ENCODE measurements at regions of chr3 and their contacts with region 1.

Region 1: DNA sequence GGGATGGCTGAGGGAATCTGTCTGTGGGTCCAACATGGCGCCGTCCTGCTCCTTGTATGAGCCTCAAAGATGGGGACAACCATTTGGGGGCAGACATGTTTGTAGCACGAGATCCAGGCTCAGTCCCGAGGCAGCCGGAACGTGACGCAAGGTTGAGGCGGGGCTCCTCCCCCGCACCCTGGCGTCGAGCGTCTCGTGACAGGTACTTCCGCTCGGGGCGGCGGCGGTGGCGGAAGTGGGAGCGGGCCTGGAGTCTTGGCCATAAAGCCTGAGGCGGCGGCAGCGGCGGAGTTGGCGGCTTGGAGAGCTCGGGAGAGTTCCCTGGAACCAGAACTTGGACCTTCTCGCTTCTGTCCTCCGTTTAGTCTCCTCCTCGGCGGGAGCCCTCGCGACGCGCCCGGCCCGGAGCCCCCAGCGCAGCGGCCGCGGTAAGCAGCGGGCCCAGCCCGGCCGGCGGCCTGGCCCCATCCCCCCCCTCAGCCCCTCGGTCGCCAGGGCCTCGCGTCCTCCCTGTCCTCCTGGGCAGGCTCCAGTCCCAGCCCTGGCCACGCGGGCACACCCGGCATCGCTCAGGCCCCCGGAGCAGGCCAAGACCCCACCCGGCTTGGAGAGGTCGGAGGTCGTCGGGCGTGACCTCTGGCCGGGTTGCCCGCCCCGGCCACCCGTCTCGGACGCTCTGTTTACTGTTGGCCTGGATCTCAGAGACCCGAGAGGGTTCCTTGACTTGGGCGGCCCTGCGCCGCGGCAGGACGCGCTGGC is at the start of gene RAB7A:
- DNase-seq: peak; percentile 99
- H3K4me3 Mint-ChIP-seq: peak within 1 kb of the TSS; percentile 81
- H3K27ac Mint-ChIP-seq: peak within 1 kb of the TSS; percentile 89
- H3K4me1 Mint-ChIP-seq: peaks cover 53% of the 10 kb centered on the region
- H3K27me3 Mint-ChIP-seq: no peaks in the 10 kb centered on the region
- total RNA-seq, gene RAB7A: 222 to 228 TPM

Region 2: GRCh38 chr3:128051837-128052594 is 674.1 kb before region 1 on chr3 and contains the start of gene SEC61A1:
- CTCF ChIA-PET with region 1: no interaction called
- intact Hi-C with region 1: loop called (anchors 2 kb)
- DNase-seq: peak; percentile 95
- H3K4me3 Mint-ChIP-seq: peak within 1 kb of the TSS; percentile 91
- H3K27ac Mint-ChIP-seq: peak within 1 kb of the TSS; percentile 95
- H3K4me1 Mint-ChIP-seq: peaks cover 40% of the 10 kb centered on the region
- H3K27me3 Mint-ChIP-seq: peaks cover under 1% of the 10 kb centered on the region
- total RNA-seq, gene SEC61A1: 115 to 119 TPM

Region 3: DNA sequence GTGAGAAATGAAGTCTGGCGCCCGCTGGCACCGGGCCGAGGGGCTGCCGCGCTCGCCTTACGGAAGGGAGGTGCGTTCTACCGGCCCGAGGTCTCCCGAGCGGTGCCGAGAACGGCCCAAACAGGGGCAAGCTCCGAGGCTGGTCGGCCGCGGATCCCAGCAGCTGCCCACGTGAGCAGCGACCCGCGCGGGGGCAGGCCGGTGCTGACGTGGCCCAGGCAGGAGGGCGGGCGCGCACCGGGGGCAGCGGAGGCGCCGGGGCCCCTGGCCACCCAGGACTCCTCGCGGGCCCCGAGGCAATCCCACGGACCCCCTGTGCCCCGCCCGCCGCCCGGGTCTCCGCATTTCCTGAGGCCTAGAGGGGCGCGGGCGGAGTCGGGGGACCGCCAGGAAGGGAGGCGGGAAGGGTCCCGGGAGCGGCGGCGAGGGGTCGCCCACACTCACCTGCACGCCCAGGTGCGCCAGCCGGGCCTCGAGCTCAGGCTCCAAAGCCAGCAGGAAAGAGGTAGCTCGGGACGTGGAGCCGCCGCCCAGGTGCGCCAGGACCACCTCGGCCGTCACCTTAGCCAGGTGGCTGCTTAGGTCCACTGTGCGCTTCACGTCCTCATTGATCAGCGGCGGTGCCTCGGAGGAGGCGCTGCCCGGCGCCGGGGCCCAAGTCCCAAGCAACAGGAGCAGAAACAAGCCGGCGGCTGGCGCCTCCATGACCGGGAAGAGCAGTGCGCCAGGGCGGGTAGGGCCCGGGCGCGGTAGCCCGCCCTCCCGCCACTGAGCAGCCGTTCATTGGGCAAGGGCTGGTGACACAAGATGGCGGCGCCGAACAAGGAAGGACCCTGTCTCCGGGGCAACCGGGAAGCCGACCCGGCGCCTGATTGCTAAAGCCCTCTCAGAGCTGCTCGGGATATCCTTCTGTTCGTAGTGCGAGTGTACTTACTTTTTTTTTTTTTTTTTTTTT is 75.7 kb before region 1 on chr3 and contains the start of gene RPN1:
- CTCF ChIA-PET with region 1: interaction called, 4 read pairs
- intact Hi-C with region 1: loop called (anchors 1 kb)
- DNase-seq: peak; percentile 97
- H3K4me3 Mint-ChIP-seq: peak within 1 kb of the TSS; percentile 83
- H3K27ac Mint-ChIP-seq: peak within 1 kb of the TSS; percentile 88
- H3K4me1 Mint-ChIP-seq: peaks cover 30% of the 10 kb centered on the region
- H3K27me3 Mint-ChIP-seq: no peaks in the 10 kb centered on the region
- total RNA-seq, gene RPN1: 124 to 129 TPM

Region 4: GRCh38 chr3:128698211-128699064 is 27.7 kb before region 1 on chr3:
- CTCF ChIA-PET with region 1: no interaction called
- intact Hi-C with region 1: loop called (anchors 1 kb)
- DNase-seq: peak; percentile 32
- H3K4me3 Mint-ChIP-seq: peak overlapping the region; percentile 65
- H3K27ac Mint-ChIP-seq: no peak overlapping the region
- H3K4me1 Mint-ChIP-seq: peaks cover 2% of the 10 kb centered on the region
- H3K27me3 Mint-ChIP-seq: no peaks in the 10 kb centered on the region

Region 5: GRCh38 chr3:128794770-128795649 is 68.9 kb after region 1 on chr3:
- CTCF ChIA-PET with region 1: interaction called, 9 read pairs
- intact Hi-C with region 1: loop called (anchors 1 kb)
- DNase-seq: peak; percentile 83
- H3K4me3 Mint-ChIP-seq: peak overlapping the region; percentile 51
- H3K27ac Mint-ChIP-seq: peak overlapping the region; percentile 91
- H3K4me1 Mint-ChIP-seq: peaks cover 94% of the 10 kb centered on the region
- H3K27me3 Mint-ChIP-seq: no peaks in the 10 kb centered on the region

Region 6: DNA sequence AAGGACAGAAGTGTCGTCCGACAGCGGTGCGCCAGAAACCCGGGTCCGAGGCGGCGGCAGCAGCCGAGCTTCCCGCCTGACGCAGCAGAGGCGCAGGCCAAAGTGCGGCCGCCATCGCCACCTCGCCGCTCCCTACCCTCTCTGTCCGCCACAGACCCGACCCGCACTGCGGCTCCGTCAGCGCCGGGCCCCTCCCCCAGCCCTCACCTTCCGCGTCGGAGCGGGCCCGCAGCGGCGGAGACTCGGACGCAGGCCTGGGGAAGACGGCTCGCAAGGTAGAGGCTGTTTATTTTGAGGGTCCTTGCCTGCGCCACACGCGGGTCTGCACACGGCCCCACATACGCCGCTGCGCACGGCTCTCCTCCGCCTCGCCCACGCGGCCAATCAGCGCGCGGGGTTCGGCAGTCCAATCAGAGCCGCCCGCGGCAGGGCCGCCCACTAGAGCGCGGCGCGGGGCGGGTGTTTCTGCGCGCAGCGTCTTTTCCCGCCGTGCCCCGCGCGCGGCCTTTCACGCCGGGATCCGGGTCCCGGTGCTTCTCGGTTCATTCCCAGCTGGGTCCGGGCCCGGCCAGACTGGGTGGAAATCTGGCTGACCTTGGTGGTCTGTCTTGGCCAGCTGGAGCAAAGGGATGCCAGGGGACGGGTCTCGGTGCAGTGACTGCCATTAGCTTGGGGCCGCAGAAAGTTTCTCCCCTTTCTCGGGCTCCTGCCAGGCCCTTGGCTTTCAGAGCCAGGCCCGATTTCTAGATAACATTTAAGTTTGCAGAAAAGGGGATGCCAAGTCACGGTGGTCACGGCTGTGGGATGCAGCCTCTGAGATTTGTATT is 457.7 kb after region 1 on chr3 and contains the start of gene CNBP:
- CTCF ChIA-PET with region 1: no interaction called
- intact Hi-C with region 1: loop called (anchors 5 kb)
- DNase-seq: peak; percentile 93
- H3K4me3 Mint-ChIP-seq: peak within 1 kb of the TSS; percentile 96
- H3K27ac Mint-ChIP-seq: peak within 1 kb of the TSS; percentile 95
- H3K4me1 Mint-ChIP-seq: peaks cover 35% of the 10 kb centered on the region
- H3K27me3 Mint-ChIP-seq: no peaks in the 10 kb centered on the region
- total RNA-seq, gene CNBP: 490 to 500 TPM

Measured in activated naive CD4-positive, alpha-beta T cell treated with anti-CD3 and anti-CD28 coated beads for 36 hours (primary cell).